ENCODE measurements at regions of chr1 and their contacts with region 1.

Region 1: DNA sequence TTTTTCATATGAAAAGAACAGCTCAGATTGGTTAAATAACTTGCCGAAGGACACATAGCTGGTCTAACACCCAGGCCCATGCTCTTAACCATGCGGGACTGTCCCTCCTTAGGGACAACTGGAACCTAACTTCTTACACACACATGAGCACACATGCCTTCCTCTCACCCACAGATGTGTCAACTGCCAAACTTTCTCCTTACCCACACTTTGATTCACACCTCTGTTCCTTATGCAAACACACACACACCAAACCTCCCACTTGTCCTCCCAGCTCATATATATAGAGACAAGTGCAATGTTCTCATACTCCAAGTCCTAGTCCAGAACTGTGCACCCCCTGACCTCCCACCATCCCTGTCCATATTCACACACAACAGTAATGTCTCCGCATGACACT is 4.3 kb downstream of the RAB25 start:
- DNase-seq: peak; percentile 21
- ATAC-seq: peak; percentile 29
- H3K4me3 Mint-ChIP-seq: no peak overlapping the region
- H3K27ac Mint-ChIP-seq: no peak overlapping the region
- H3K4me1 Mint-ChIP-seq: peaks cover 14% of the 10 kb centered on the region
- H3K27me3 Mint-ChIP-seq: no peaks in the 10 kb centered on the region

Region 2: DNA sequence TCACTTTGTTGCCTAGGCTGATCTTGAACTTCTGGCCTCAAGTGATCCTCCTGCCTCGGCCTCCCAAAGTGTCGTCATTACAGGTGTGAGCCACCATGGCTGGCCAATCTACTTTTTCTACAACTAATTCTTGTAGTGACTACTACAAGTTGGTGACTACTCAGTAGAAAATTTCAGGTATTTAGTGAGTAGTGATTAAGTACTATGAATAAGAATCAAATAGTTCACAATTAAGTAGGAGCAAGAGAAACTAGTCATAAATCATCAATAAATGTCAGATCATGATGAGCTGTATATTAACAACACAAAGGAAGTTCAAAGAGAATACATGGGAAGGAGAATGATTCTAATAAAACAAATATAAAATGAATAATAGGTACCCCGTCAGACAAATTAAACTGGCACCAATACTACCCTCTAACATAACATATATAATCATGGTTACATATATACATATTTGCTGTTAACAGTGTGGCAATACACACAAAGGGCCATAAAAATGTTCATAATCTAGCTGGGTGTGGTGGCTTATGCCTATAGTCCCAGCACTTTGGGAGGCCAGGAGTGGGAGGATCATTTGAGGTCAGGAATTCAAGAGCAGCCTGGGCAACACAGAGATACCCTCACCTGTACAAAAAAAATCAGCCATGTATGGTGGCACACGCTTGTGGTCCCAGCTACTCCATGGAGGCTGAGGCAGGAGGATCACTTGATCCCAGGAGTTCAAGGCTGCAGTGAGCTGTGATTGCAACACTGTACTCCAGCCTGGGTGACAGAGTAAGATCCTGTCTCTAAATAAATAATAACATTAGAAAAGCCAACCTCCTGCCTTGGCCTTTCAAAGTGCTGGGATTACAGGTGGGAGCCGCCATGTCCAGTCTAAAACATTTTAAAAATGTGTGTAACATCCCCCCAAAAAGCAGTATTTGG is 395.7 kb before region 1 on chr1:
- CTCF ChIA-PET with region 1: no interaction called
- POLR2A ChIA-PET with region 1: no interaction called
- intact Hi-C with region 1: no loop called
- DNase-seq: no peak
- ATAC-seq: no peak
- H3K4me3 Mint-ChIP-seq: no peak overlapping the region
- H3K27ac Mint-ChIP-seq: no peak overlapping the region
- H3K4me1 Mint-ChIP-seq: no peaks in the 10 kb centered on the region
- H3K27me3 Mint-ChIP-seq: no peaks in the 10 kb centered on the region

Region 3: DNA sequence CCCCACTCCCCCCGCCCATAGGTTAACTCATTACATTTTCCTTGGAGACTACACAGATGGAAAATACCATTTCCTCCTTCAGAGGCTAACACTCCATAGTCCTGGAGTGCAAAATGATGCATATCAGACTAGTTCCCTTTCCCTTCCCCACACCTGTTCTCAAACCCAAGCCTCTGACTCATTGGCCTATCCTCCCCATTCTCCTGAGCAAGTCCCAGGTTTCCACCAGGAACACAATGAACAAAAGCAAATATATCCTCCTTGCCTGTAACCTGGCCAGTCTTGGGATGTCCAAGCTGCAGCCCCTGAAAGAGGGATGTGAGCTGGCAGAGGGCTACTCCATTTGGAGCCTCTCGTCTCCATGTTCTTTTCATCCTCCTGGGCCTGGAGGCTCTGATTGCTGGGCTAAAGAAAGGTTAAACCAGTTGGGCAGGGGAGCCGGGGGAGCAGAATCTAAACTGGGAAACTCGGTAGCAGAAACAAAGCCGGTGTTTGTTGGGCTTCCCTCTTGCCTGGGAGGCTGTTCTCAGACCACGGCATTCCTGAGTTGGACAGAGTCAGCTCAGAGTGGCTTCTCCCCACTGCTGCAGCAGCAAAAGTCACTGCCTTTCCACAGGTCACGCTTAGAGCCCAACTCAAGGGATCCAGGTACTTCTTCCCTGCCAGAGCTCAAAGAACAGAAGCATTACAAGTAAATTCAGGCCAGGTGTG is 58.4 kb before region 1 on chr1:
- CTCF ChIA-PET with region 1: interaction called, 12 read pairs
- POLR2A ChIA-PET with region 1: no interaction called
- intact Hi-C with region 1: no loop called
- DNase-seq: no peak
- ATAC-seq: no peak
- H3K4me3 Mint-ChIP-seq: no peak overlapping the region
- H3K27ac Mint-ChIP-seq: no peak overlapping the region
- H3K4me1 Mint-ChIP-seq: peaks cover 16% of the 10 kb centered on the region
- H3K27me3 Mint-ChIP-seq: no peaks in the 10 kb centered on the region

Region 4: GRCh38 chr1:156025877-156026276 is 39.3 kb before region 1 on chr1:
- CTCF ChIA-PET with region 1: interaction called, 19 read pairs
- POLR2A ChIA-PET with region 1: interaction called, 3 read pairs
- intact Hi-C with region 1: loop called (anchors 1 kb)
- DNase-seq: peak; percentile 68
- ATAC-seq: peak; percentile 87
- H3K4me3 Mint-ChIP-seq: no peak overlapping the region
- H3K27ac Mint-ChIP-seq: no peak overlapping the region
- H3K4me1 Mint-ChIP-seq: peaks cover 3% of the 10 kb centered on the region
- H3K27me3 Mint-ChIP-seq: peaks cover 4% of the 10 kb centered on the region

Measured in activated CD4-positive, alpha-beta T cell treated with anti-CD3 and anti-CD28 coated beads for 36 hours (primary cell).